H1 (cell line): ENCODE measurements at regions of chr11 and their contacts with region 1.

Region 1: DNA sequence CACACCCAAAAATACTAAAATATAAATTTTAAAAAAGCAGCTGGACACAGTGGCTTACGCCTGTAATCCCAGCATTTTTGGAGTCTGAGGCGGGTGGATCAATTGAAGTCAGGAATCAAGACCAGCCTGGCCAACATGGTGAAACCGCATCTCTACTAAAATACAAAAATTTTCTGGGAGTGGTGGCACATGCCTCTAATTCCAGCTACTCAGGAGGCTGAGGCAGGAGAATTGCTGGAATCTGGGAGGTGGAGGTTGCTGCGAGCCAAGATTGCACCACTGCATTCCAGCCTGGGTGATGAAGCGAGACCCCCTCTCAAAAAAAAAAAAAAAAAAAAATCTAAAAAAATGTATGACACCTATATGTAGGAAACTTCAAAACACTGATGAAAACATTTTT is 242.7 kb upstream of the CHORDC1 start:
- DNase-seq: no peak
- H3K4me3 ChIP-seq: no peak overlapping the region
- H3K27ac ChIP-seq: no peak overlapping the region
- H3K4me1 ChIP-seq: no peaks in the 10 kb centered on the region; a peak in 1 of 7 replicates
- H3K27me3 ChIP-seq: no peaks in the 10 kb centered on the region
- CTCF ChIP-seq: no peak
- EP300 ChIP-seq: no peak
- POLR2A ChIP-seq: no peak
- RAD21 ChIP-seq: no peak

Region 2: GRCh38 chr11:90192869-90193582 is 272.5 kb before region 1 on chr11:
- CTCF ChIA-PET with region 1: no interaction called
- POLR2A ChIA-PET with region 1: no interaction called
- DNase-seq: no peak
- H3K4me3 ChIP-seq: no peak overlapping the region
- H3K27ac ChIP-seq: no peak overlapping the region
- H3K4me1 ChIP-seq: no peaks in the 10 kb centered on the region
- H3K27me3 ChIP-seq: no peaks in the 10 kb centered on the region
- CTCF ChIP-seq: no peak
- EP300 ChIP-seq: no peak
- POLR2A ChIP-seq: no peak
- RAD21 ChIP-seq: no peak

Region 3: DNA sequence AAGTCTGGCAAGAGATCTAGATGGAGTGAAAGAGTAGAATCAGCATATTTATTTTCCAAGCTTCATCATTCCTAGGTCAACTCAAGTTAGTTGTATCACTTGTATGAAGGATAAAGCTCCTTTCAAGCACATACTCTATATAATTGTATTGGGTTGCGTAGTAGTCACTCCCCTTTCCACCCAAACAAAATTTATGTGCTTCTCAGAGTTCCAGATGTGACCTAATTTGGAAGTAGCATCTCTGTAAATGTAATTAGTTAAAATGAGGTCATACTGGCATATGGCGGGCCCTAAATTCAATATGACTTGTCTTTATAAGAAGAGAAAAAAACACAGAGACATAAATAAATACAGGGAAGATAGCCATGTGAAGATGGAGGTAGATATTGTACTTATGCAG is 15.9 kb before region 1 on chr11:
- CTCF ChIA-PET with region 1: interaction called, 14 read pairs
- POLR2A ChIA-PET with region 1: no interaction called
- DNase-seq: no peak
- H3K4me3 ChIP-seq: no peak overlapping the region
- H3K27ac ChIP-seq: no peak overlapping the region
- H3K4me1 ChIP-seq: peaks cover 0 to 6% (median 3%) of the 10 kb centered on the region in 4 experiments; a peak in 3 of 7 replicates
- H3K27me3 ChIP-seq: no peaks in the 10 kb centered on the region
- CTCF ChIP-seq: no peak
- EP300 ChIP-seq: no peak
- POLR2A ChIP-seq: no peak
- RAD21 ChIP-seq: no peak

Region 4: DNA sequence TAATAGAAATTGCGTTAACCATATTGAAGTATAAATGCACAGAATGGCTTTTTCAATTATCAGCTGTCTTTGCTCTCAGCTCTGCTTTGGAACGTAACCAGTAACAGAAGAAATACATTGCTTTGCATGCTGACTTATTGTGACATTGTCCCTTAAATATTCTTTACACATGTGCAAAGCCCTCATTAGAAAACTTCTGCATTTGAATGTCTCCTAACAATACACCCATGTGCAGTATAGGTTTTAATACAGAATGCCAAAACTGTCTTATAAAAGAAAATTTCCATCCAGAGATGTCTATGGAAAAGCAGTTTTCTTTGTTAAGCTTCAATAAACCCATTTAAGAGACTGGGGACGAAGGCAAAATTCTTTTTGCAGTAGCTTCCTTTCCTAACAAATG is 317.6 kb after region 1 on chr11:
- CTCF ChIA-PET with region 1: no interaction called
- POLR2A ChIA-PET with region 1: no interaction called
- DNase-seq: no peak
- H3K4me3 ChIP-seq: no peak overlapping the region
- H3K27ac ChIP-seq: no peak overlapping the region
- H3K4me1 ChIP-seq: no peaks in the 10 kb centered on the region
- H3K27me3 ChIP-seq: no peaks in the 10 kb centered on the region
- CTCF ChIP-seq: no peak
- EP300 ChIP-seq: no peak
- POLR2A ChIP-seq: no peak
- RAD21 ChIP-seq: no peak